Naive thymus-derived CD8-positive, alpha-beta T cell (primary cell): ENCODE measurements at regions of chr22 and their contacts with region 1.

Region 1: DNA sequence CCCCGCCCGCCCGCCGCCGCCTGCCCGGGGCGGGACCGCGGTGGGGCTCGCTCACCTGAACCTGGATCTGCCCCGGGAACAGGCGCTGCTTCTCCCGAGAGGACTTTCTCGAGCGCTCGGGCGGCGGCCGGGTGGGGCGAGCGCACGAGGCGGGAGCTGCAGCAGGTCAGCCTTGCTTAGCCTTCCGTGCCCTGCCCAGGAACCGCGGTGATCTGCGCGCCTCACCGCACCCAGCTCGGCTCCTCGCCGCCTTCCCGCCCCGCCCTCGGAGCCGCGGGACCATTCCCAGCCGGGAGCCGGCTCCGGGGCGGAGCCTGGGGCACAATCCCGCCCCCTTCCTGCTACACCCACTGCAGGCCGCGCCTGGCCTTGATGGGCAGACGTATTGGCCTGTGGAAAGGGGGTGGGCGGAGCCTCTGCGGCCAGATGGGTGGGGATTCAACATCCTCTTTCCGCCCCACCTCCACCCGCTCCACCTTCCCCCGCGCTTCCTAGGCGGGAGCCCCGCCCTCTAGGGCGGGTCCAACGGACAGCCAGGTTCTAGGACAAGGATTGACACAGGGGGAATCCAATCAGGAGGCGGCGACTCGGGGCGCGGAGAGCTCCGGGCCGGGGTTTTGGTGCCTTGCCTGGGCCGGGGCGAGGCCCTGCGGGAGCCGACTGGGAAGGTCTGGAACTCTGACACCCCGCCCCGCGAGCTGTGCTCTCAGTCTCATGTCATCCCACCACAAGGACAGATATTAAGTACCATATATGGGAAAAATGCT is at the start of gene MYH9:
- DNase-seq: peak; percentile 96 to 99 (median 98)
- ATAC-seq: peak; percentile 71 to 81
- H3K4me3 Mint-ChIP-seq: peak within 1 kb of the TSS; percentile 87 to 98 (median 92)
- H3K27ac Mint-ChIP-seq: peak within 1 kb of the TSS; percentile 78 to 99 (median 96)
- H3K4me1 Mint-ChIP-seq: peaks cover 20 to 56% (median 38%) of the 10 kb centered on the region in 4 donors
- H3K27me3 Mint-ChIP-seq: no peaks in the 10 kb centered on the region
- polyA plus RNA-seq, gene MYH9: 51.2 to 389 (median 105) TPM

Region 2: GRCh38 chr22:36398621-36399469 is 10.9 kb after region 1 on chr22:
- POLR2A ChIA-PET with region 1: interaction called, 35 read pairs
- DNase-seq: no peak
- ATAC-seq: no peak
- H3K4me3 Mint-ChIP-seq: peak overlapping the region in 1 of 10 donors; percentile 39
- H3K27ac Mint-ChIP-seq: peak overlapping the region in 4 of 10 donors; percentile 1 to 74 (median 46)
- H3K4me1 Mint-ChIP-seq: peaks cover 21 to 50% (median 39%) of the 10 kb centered on the region in 4 donors
- H3K27me3 Mint-ChIP-seq: no peaks in the 10 kb centered on the region

Region 3: DNA sequence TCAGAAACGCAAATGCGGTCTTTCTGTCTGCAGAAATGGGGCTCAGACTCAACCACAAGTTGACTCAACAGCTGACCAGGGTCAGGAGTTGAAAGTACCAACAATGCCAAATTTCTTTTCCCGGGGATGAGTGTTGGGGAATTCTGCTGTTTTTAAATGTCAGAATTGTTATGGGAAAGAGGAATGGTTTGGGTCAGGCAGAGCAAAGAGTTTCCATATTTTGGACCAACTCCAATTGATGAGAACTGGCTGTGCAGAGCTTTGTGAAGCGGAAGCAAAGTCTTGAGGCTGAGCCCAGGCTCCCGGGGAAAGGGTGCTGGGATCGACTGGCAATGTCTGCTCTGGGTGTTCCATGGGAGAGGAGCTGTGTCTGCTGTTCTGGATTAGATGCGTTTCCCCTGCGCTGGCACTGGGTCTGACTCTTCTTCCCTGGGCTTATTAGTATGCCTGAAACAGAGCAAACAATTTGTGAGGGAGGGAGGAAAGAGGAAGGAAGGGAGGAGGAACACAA is 57.3 kb after region 1 on chr22:
- POLR2A ChIA-PET with region 1: no interaction called
- DNase-seq: no peak
- ATAC-seq: no peak
- H3K4me3 Mint-ChIP-seq: no peak overlapping the region
- H3K27ac Mint-ChIP-seq: peak overlapping the region in 2 of 10 donors; percentile 7 to 25
- H3K4me1 Mint-ChIP-seq: peaks cover 1 to 57% (median 28%) of the 10 kb centered on the region in 4 donors
- H3K27me3 Mint-ChIP-seq: no peaks in the 10 kb centered on the region